ENCODE measurements at regions of chr1 and their contacts with region 1.

Region 1: GRCh38 chr1:157992031-157992832 is 1.2 kb upstream of the KIRREL1 start:
- DNase-seq: peak; percentile 68 to 75
- H3K4me3 ChIP-seq: no peak overlapping the region
- H3K4me3 Mint-ChIP-seq: peak overlapping the region; percentile 99
- H3K27ac Mint-ChIP-seq: peak overlapping the region; percentile 96
- H3K4me1 ChIP-seq: peaks cover 24% of the 10 kb centered on the region
- H3K4me1 Mint-ChIP-seq: peaks cover 28% of the 10 kb centered on the region
- H3K27me3 ChIP-seq: no peaks in the 10 kb centered on the region
- H3K27me3 Mint-ChIP-seq: no peaks in the 10 kb centered on the region
- CTCF ChIP-seq: peak; percentile 92 to 96

Region 2: DNA sequence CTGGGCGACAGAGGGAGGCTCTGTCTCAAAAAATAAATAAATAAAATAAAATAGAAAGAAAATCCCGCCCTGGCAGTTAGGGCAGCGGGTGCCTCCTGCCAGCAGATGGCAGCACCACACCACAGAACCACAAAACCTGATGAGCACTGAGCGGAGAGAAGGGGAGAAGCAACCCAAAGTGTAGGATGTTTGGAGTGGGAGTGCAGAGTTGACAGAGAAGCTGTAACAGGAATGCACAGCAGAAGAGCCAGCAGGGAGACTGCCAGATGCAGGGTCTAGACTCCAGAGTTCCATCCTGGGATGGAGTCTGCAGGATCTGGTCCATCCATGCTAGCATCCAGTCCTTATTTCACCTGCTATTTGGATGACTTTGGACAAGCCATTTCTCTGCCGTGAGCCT is 28.5 kb before region 1 on chr1:
- CTCF ChIA-PET with region 1: interaction called, 9 read pairs
- POLR2A ChIA-PET with region 1: no interaction called
- intact Hi-C with region 1: loop called (anchors 1 kb)
- DNase-seq: peak; percentile 79 to 82
- H3K4me3 ChIP-seq: no peak overlapping the region
- H3K4me3 Mint-ChIP-seq: no peak overlapping the region
- H3K27ac Mint-ChIP-seq: no peak overlapping the region
- H3K4me1 ChIP-seq: peaks cover 32% of the 10 kb centered on the region
- H3K4me1 Mint-ChIP-seq: peaks cover 38% of the 10 kb centered on the region
- H3K27me3 ChIP-seq: no peaks in the 10 kb centered on the region
- H3K27me3 Mint-ChIP-seq: peaks cover 3% of the 10 kb centered on the region
- CTCF ChIP-seq: peak; percentile 86 to 94

Region 3: GRCh38 chr1:158019171-158019868 is 27.1 kb after region 1 on chr1:
- CTCF ChIA-PET with region 1: interaction called, 17 read pairs
- POLR2A ChIA-PET with region 1: interaction called, 3 read pairs
- intact Hi-C with region 1: no loop called
- DNase-seq: peak; percentile 63 to 73
- H3K4me3 ChIP-seq: no peak overlapping the region
- H3K4me3 Mint-ChIP-seq: peak overlapping the region; percentile 21
- H3K27ac Mint-ChIP-seq: peak overlapping the region; percentile 79
- H3K4me1 ChIP-seq: peaks cover 61% of the 10 kb centered on the region
- H3K4me1 Mint-ChIP-seq: peaks cover 53% of the 10 kb centered on the region
- H3K27me3 ChIP-seq: no peaks in the 10 kb centered on the region
- H3K27me3 Mint-ChIP-seq: no peaks in the 10 kb centered on the region
- CTCF ChIP-seq: no peak

Region 4: GRCh38 chr1:158035976-158036583 is 43.8 kb after region 1 on chr1:
- CTCF ChIA-PET with region 1: interaction called, 24 read pairs
- POLR2A ChIA-PET with region 1: no interaction called
- intact Hi-C with region 1: loop called (anchors 1 kb)
- DNase-seq: peak in 1 of 2 experiments; percentile 41
- H3K4me3 ChIP-seq: no peak overlapping the region
- H3K4me3 Mint-ChIP-seq: no peak overlapping the region
- H3K27ac Mint-ChIP-seq: no peak overlapping the region
- H3K4me1 ChIP-seq: peaks cover 6% of the 10 kb centered on the region
- H3K4me1 Mint-ChIP-seq: peaks cover 8% of the 10 kb centered on the region
- H3K27me3 ChIP-seq: no peaks in the 10 kb centered on the region
- H3K27me3 Mint-ChIP-seq: no peaks in the 10 kb centered on the region
- CTCF ChIP-seq: peak; percentile 50 to 81

Region 5: DNA sequence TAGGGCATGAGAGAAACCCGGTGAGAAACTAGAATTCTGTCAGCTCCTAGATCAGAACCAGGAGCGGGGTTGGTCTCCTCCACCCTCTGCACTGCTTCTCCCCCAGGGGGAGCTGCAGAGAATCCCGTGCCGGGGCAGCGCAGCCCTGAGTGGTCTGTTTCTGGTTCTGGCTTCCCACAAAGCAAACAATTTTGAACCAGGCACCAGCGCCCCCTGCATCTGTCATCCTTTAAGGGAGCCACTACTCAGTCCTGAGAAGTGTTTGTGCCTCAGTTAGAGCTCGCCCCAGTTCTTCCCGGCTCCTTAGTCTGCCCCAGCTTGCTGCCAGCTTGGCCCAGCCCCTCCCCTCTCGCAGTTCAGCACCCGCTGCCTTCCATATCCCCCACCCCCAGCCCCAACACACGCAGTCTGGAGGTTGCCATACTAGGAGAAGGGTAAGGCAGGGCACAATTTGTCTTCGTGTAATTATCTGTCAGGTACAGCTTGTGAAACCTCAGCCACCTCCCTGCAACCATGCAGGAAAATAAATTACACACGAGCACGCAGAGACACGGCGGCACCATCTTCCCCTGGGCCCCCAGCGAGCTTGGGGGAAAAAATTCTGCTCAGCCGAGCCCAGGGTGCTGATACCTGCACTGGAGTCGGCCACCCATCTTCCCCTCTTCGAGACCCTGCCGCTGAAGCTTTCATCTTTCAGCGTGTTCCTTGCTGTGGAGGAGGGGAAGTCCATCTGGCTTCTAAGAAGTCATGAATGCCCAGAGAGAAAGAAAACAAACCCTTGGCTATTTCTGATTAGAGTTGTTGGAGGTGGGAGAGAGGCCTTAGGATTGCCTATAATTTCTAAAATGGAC is 125.8 kb after region 1 on chr1:
- CTCF ChIA-PET with region 1: interaction called, 63 read pairs
- POLR2A ChIA-PET with region 1: no interaction called
- intact Hi-C with region 1: loop called (anchors 1 kb)
- DNase-seq: peak; percentile 42 to 54
- H3K4me3 ChIP-seq: no peak overlapping the region
- H3K4me3 Mint-ChIP-seq: no peak overlapping the region
- H3K27ac Mint-ChIP-seq: no peak overlapping the region
- H3K4me1 ChIP-seq: no peaks in the 10 kb centered on the region
- H3K4me1 Mint-ChIP-seq: peaks cover 7% of the 10 kb centered on the region
- H3K27me3 ChIP-seq: no peaks in the 10 kb centered on the region
- H3K27me3 Mint-ChIP-seq: peaks cover 2% of the 10 kb centered on the region
- CTCF ChIP-seq: peak in 1 of 2 experiments; percentile 19